Natural killer cell (primary cell): ENCODE measurements at regions of chr10 and their contacts with region 1.

Region 1: GRCh38 chr10:33008499-33009243 is 50.6 kb upstream of the ITGB1 start:
- DNase-seq: peak in 1 of 2 donors; percentile 86
- ATAC-seq: peak; percentile 33 to 62 (median 45)
- H3K4me3 ChIP-seq: no peak overlapping the region
- H3K4me3 Mint-ChIP-seq: peak overlapping the region; percentile 75
- H3K27ac ChIP-seq: no peak overlapping the region
- H3K27ac Mint-ChIP-seq: peak overlapping the region; percentile 71 to 83
- H3K4me1 ChIP-seq: peaks cover 37% of the 10 kb centered on the region
- H3K4me1 Mint-ChIP-seq: peaks cover 52% of the 10 kb centered on the region in 2 donors
- H3K27me3 ChIP-seq: no peaks in the 10 kb centered on the region
- H3K27me3 Mint-ChIP-seq: no peaks in the 10 kb centered on the region
- CTCF ChIP-seq: peak; percentile 100

Region 2: DNA sequence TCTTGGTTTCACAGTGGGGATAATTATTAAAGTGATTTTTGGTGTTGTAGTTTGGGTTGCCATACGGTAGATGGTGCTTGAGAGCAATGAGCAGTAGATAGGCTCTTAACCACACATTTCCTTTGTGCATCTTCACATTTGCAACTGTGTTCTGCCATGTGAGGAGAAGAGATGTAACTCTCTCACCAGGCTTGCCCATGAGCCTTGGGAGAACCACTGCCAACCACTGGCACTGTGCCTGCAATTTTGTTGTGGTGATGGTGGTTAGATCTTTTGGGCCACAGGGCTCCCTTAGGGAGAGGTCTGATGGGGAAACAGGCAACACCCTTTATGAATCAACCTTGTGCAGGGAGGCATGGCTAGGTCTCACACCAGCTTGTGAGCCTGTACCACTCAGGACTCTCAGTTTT is 358.4 kb before region 1 on chr10:
- intact Hi-C with region 1: loop called (anchors 5 kb)
- DNase-seq: peak in 1 of 2 donors; percentile 46
- ATAC-seq: peak; percentile 55 to 81 (median 69)
- H3K4me3 ChIP-seq: no peak overlapping the region
- H3K4me3 Mint-ChIP-seq: no peak overlapping the region
- H3K27ac ChIP-seq: no peak overlapping the region
- H3K27ac Mint-ChIP-seq: peak overlapping the region in 1 of 2 donors; percentile 73
- H3K4me1 ChIP-seq: peaks cover 6% of the 10 kb centered on the region
- H3K4me1 Mint-ChIP-seq: peaks cover 12 to 17% of the 10 kb centered on the region in 2 donors
- H3K27me3 ChIP-seq: no peaks in the 10 kb centered on the region
- H3K27me3 Mint-ChIP-seq: no peaks in the 10 kb centered on the region
- CTCF ChIP-seq: peak; percentile 25

Region 3: GRCh38 chr10:32795598-32796183 is 213.0 kb before region 1 on chr10:
- intact Hi-C with region 1: loop called (anchors 1 kb)
- DNase-seq: peak in 1 of 2 donors; percentile 66
- ATAC-seq: peak in 2 of 3 donors; percentile 61
- H3K4me3 ChIP-seq: no peak overlapping the region
- H3K4me3 Mint-ChIP-seq: no peak overlapping the region
- H3K27ac ChIP-seq: no peak overlapping the region
- H3K27ac Mint-ChIP-seq: no peak overlapping the region
- H3K4me1 ChIP-seq: no peaks in the 10 kb centered on the region
- H3K4me1 Mint-ChIP-seq: no peaks in the 10 kb centered on the region
- H3K27me3 ChIP-seq: no peaks in the 10 kb centered on the region
- H3K27me3 Mint-ChIP-seq: peaks cover 0 to 8% of the 10 kb centered on the region in 2 donors
- CTCF ChIP-seq: peak; percentile 85

Region 4: GRCh38 chr10:32938554-32939061 is 70.1 kb before region 1 on chr10:
- intact Hi-C with region 1: loop called (anchors 5 kb)
- DNase-seq: no peak
- ATAC-seq: peak in 2 of 3 donors; percentile 22 to 28
- H3K4me3 ChIP-seq: no peak overlapping the region
- H3K4me3 Mint-ChIP-seq: peak overlapping the region; percentile 75
- H3K27ac ChIP-seq: peak overlapping the region; percentile 31
- H3K27ac Mint-ChIP-seq: peak overlapping the region; percentile 80 to 87
- H3K4me1 ChIP-seq: peaks cover 33% of the 10 kb centered on the region
- H3K4me1 Mint-ChIP-seq: peaks cover 60 to 63% of the 10 kb centered on the region in 2 donors
- H3K27me3 ChIP-seq: no peaks in the 10 kb centered on the region
- H3K27me3 Mint-ChIP-seq: no peaks in the 10 kb centered on the region
- CTCF ChIP-seq: no peak

Region 5: DNA sequence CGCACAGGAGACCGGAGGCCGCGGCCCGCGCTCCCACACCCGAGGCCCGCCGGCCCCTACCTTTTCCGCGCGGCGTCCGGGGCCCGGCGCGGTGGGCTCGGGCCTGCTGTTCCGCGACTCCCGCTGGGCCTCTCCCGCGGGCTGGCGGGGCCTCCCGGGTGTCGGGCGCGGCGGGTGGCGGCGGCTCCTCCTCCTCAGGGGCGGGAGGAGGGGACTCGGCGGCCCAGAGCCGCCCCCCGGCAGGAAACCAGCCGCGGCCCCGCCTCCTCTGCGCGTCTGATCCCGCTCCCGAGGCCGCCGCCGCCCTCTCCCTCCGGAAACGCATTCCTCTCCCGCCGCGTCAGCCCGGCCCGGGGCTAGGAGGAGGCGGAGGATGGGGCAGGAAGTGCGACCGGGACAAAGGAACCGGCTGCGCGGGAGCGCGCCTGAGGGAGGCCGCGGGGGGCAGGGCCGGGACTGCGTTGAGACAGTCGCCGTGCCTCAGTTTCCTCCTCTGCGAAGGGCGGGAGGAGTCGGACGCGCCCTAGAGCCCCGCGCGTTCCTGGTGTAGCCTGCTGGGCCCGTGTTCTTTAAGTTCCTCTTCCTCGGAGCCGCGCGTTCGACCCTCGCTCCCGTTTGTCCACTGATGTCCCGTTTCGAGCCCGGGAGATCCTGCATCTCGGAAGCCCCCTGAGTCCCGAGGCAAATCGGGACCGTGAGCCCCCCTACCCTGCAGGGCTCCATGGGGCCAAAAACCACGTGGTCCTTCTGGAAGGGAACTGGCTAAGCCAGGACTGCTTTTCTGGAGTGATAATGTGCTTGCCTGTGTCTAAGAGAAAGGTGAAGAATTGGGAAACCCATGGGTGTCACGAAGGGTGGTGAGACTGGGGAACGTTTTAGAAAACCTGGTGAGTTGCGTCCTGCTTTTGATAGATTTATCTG is 50.3 kb before region 1 on chr10 and contains the start of gene ITGB1:
- intact Hi-C with region 1: loop called (anchors 5 kb)
- DNase-seq: peak; percentile 85 to 90
- ATAC-seq: peak; percentile 88 to 95 (median 93)
- H3K4me3 ChIP-seq: peak within 1 kb of the TSS; percentile 64
- H3K4me3 Mint-ChIP-seq: peak within 1 kb of the TSS; percentile 94
- H3K27ac ChIP-seq: peak within 1 kb of the TSS; percentile 63
- H3K27ac Mint-ChIP-seq: peak within 1 kb of the TSS; percentile 86 to 94
- H3K4me1 ChIP-seq: peaks cover 27% of the 10 kb centered on the region
- H3K4me1 Mint-ChIP-seq: peaks cover 44 to 47% of the 10 kb centered on the region in 2 donors
- H3K27me3 ChIP-seq: no peaks in the 10 kb centered on the region
- H3K27me3 Mint-ChIP-seq: no peaks in the 10 kb centered on the region
- CTCF ChIP-seq: no peak
- total RNA-seq, gene ITGB1: 175 to 280 (median 202) TPM

Region 6: DNA sequence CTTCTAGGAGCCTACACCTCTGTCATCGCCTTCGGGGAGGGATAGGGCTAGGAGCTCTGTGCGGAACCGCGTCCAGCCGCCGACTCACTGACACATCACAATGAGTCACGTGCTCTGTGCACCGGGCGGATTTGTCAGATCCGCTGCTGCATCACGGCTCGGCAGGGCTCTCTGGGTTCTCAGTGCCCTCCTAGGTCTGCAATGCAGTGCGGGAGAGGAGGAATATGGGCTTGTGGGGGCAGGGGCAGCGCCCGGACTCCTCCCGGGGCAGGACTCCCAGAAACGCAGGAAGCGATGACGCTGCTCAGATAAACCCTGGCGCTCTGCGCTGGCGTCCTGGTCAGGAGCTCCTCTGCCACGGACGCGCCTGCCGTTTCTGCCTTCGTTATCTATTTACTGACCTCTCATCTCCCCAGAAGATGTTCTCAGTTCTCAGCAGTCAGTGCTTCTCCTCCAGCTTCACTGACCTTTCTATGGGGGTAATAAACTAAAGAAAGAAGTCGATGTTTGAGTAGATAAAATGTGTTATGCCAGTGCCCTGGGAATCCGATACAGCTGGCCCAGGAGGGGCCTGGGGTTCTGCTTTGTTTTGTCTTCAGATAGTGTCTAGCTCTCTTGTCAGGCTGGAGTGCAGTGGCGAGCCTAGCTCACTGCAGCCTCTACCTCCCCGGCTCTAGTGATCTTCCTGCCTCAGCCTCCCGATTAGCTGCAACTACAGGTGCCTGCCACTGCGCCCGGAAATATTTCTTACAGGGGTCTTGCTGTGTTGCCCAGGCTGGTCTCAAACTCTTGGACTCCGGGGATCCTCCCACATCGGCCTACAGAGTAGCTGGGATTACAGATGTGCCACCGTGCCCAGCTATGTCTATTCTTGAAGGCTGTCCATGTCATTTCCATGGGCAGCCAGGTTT is 27.9 kb before region 1 on chr10:
- intact Hi-C with region 1: loop called (anchors 2 kb)
- DNase-seq: peak; percentile 80 to 89
- ATAC-seq: peak; percentile 76 to 90 (median 81)
- H3K4me3 ChIP-seq: peak overlapping the region; percentile 63
- H3K4me3 Mint-ChIP-seq: peak overlapping the region; percentile 95
- H3K27ac ChIP-seq: peak overlapping the region; percentile 91
- H3K27ac Mint-ChIP-seq: peak overlapping the region; percentile 98 to 99
- H3K4me1 ChIP-seq: peaks cover 51% of the 10 kb centered on the region
- H3K4me1 Mint-ChIP-seq: peaks cover 40 to 44% of the 10 kb centered on the region in 2 donors
- H3K27me3 ChIP-seq: no peaks in the 10 kb centered on the region
- H3K27me3 Mint-ChIP-seq: no peaks in the 10 kb centered on the region
- CTCF ChIP-seq: no peak

Region 7: GRCh38 chr10:33155720-33156638 is 147.3 kb after region 1 on chr10:
- intact Hi-C with region 1: loop called (anchors 5 kb)
- DNase-seq: peak in 1 of 2 donors; percentile 83
- ATAC-seq: peak; percentile 67 to 98 (median 94)
- H3K4me3 ChIP-seq: no peak overlapping the region
- H3K4me3 Mint-ChIP-seq: no peak overlapping the region
- H3K27ac ChIP-seq: no peak overlapping the region
- H3K27ac Mint-ChIP-seq: peak overlapping the region; percentile 2 to 19
- H3K4me1 ChIP-seq: peaks cover 10% of the 10 kb centered on the region
- H3K4me1 Mint-ChIP-seq: peaks cover 18 to 33% of the 10 kb centered on the region in 2 donors
- H3K27me3 ChIP-seq: no peaks in the 10 kb centered on the region
- H3K27me3 Mint-ChIP-seq: peaks cover 0 to 2% of the 10 kb centered on the region in 2 donors
- CTCF ChIP-seq: peak; percentile 75